Activated CD4-positive, alpha-beta T cell treated with anti-CD3 and anti-CD28 coated beads for 36 hours (primary cell): ENCODE measurements at regions of chr2 and their contacts with region 1.

Region 1: DNA sequence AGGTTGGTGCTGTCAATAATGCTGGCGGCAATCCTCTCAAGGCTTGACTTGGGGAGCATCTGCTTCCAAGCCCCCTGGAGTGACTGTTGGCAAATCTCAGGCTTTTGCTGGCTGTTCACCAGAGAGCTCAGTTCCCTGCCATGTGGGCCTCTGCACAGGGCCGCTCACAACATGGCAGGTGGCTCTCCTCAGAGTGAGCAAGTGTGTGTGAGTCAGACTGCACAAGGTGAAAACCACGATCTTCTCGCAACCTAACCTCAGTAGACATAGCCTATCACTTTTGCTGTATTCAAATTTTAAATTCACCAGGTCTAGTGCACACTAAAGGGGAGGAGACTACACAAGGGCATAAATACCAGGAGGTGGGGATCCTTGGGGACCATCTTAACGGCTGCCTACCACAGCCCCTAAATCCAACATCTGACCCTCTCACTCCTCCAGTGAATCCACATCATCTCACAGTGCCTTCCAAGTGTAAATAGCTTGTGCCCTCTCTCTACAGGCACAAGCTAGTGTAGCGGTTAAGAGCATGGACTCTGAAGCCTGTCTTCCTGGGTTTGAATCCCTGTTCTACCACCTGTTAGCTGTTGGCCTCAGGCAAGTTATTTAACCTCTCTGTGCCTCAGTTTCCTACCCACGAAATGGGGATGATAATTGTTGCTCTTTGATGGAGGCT is 187.7 kb upstream of the CXCR4 start:
- DNase-seq: peak; percentile 84
- ATAC-seq: peak; percentile 99
- H3K4me3 Mint-ChIP-seq: no peak overlapping the region
- H3K27ac Mint-ChIP-seq: peak overlapping the region; percentile 88
- H3K4me1 Mint-ChIP-seq: peaks cover 33% of the 10 kb centered on the region
- H3K27me3 Mint-ChIP-seq: peaks cover 5% of the 10 kb centered on the region

Region 2: DNA sequence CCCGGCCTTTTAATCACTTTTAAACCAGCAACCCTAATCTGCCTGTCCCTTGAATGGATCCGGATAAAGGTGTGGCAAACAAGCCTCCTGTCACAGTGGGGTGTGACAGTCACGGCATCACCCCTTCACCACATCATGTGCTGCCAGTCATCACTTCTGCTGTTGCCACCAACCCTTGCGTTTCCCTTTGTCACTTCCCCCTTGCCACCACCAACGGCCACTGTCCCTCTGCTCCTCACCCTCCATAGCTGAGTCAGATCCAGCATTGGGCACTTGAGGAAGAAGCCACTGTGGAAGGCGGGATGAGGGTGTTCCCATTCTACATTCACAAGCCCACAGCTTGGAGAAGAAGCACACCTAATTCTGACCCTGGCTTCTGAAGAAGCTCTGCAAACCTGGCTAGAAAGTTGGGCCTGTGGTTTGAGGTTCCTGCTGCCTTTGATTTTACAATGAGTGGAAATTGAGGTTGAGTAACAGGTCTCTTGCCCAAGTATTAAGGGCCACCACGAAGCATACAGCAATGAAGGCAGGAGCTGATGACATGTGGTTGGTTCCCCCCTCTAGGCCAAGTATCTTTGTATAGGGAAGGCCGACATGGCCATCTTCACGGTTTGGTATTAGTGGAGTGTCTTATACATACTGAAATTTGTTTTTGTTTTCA is 297.3 kb before region 1 on chr2:
- CTCF ChIA-PET with region 1: no interaction called
- POLR2A ChIA-PET with region 1: interaction called, 10 read pairs
- intact Hi-C with region 1: no loop called
- DNase-seq: peak; percentile 74
- ATAC-seq: peak; percentile 91
- H3K4me3 Mint-ChIP-seq: no peak overlapping the region
- H3K27ac Mint-ChIP-seq: peak overlapping the region; percentile 47
- H3K4me1 Mint-ChIP-seq: peaks cover 31% of the 10 kb centered on the region
- H3K27me3 Mint-ChIP-seq: no peaks in the 10 kb centered on the region

Region 3: GRCh38 chr2:136143603-136144451 is 161.8 kb before region 1 on chr2:
- CTCF ChIA-PET with region 1: no interaction called
- POLR2A ChIA-PET with region 1: no interaction called
- intact Hi-C with region 1: no loop called
- DNase-seq: no peak
- ATAC-seq: no peak
- H3K4me3 Mint-ChIP-seq: no peak overlapping the region
- H3K27ac Mint-ChIP-seq: no peak overlapping the region
- H3K4me1 Mint-ChIP-seq: peaks cover 29% of the 10 kb centered on the region
- H3K27me3 Mint-ChIP-seq: peaks cover 8% of the 10 kb centered on the region

Region 4: GRCh38 chr2:136207030-136207623 is 98.5 kb before region 1 on chr2:
- CTCF ChIA-PET with region 1: no interaction called
- POLR2A ChIA-PET with region 1: interaction called, 4 read pairs
- intact Hi-C with region 1: loop called in 1 of 2 experiments (anchors 2 kb)
- DNase-seq: peak; percentile 50
- ATAC-seq: peak; percentile 75
- H3K4me3 Mint-ChIP-seq: peak overlapping the region; percentile 26
- H3K27ac Mint-ChIP-seq: peak overlapping the region; percentile 88
- H3K4me1 Mint-ChIP-seq: peaks cover 40% of the 10 kb centered on the region
- H3K27me3 Mint-ChIP-seq: peaks cover 2% of the 10 kb centered on the region

Region 5: GRCh38 chr2:136319237-136319636 is 13.6 kb after region 1 on chr2:
- CTCF ChIA-PET with region 1: interaction called, 16 read pairs
- POLR2A ChIA-PET with region 1: interaction called, 4 read pairs
- intact Hi-C with region 1: no loop called
- DNase-seq: peak; percentile 61
- ATAC-seq: peak; percentile 54
- H3K4me3 Mint-ChIP-seq: no peak overlapping the region
- H3K27ac Mint-ChIP-seq: peak overlapping the region; percentile 72
- H3K4me1 Mint-ChIP-seq: peaks cover 58% of the 10 kb centered on the region
- H3K27me3 Mint-ChIP-seq: peaks cover 4% of the 10 kb centered on the region